Calu3 (cell line): ENCODE measurements at regions of chr2 and their contacts with region 1.

Region 1: GRCh38 chr2:176283251-176283650 is 14.0 kb downstream of the MTX2 start:
- DNase-seq: no peak
- H3K4me3 Mint-ChIP-seq: no peak overlapping the region
- H3K27ac Mint-ChIP-seq: no peak overlapping the region
- H3K4me1 Mint-ChIP-seq: peaks cover 35% of the 10 kb centered on the region
- H3K27me3 Mint-ChIP-seq: no peaks in the 10 kb centered on the region
- CTCF ChIP-seq: no peak

Region 2: DNA sequence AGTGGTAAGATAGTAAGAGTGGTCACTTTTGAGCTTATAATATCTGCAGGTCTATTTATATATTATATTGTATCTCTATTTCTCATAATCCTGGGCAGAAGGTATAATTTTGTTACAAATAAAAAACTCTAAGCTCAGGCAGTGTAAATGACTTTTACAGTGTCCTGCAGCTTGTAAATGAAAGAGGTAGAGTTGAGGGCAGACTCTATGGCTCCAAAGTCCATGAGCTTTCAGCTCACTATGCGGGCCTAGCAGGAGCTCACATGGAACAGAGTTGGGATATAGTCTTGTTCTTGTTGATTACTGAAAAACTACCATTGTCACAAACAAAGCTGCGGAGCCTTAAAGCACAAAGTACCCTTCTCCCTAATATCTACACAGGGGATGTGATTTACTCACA is 642.6 kb before region 1 on chr2:
- CTCF ChIA-PET with region 1: no interaction called
- intact Hi-C with region 1: no loop called
- DNase-seq: no peak
- H3K4me3 Mint-ChIP-seq: no peak overlapping the region
- H3K27ac Mint-ChIP-seq: no peak overlapping the region
- H3K4me1 Mint-ChIP-seq: no peaks in the 10 kb centered on the region
- H3K27me3 Mint-ChIP-seq: no peaks in the 10 kb centered on the region
- CTCF ChIP-seq: no peak

Region 3: DNA sequence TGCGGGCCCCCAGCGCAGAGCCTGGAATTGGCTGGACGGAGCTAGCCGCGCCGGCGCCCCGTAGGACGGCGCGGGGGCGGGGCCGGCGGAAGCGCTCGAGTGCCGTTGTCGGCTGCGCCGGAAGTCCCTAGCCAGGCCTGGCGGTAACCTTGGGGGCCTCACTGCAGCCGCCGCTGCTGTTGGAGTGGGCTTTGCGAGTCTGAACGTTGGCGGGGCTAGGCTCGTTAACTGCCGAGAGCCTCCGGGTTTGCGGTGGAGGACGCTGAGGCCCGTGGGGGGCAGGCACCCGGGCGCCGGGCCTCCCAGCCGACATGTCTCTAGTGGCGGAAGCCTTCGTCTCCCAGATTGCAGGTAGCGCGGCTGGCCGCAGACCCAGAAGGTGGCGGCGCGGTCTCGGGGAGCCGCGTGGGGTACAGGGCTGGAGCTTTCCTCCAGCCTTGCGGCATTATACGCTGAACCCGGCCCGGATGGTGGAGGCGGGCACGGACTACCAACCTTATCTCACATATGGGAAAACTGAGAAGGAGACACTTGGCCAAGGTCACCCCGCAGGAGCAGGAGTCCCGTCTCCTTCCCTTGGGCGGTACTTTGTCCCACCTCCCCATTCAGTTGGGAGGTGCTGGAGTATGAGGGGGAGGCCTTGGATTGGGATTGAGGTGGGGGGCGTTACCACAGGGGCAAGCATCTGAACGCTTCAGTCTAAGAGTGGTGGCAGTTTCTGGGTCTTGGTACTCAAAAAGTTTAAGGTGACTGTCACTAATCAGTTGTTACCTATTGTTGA is 13.7 kb before region 1 on chr2 and contains the start of gene MTX2:
- CTCF ChIA-PET with region 1: no interaction called
- intact Hi-C with region 1: loop called (anchors 1 kb)
- DNase-seq: peak; percentile 86
- H3K4me3 Mint-ChIP-seq: peak within 1 kb of the TSS; percentile 97
- H3K27ac Mint-ChIP-seq: peak within 1 kb of the TSS; percentile 81
- H3K4me1 Mint-ChIP-seq: peaks cover 13% of the 10 kb centered on the region
- H3K27me3 Mint-ChIP-seq: no peaks in the 10 kb centered on the region
- CTCF ChIP-seq: peak; percentile 26
- total RNA-seq, gene MTX2: 36.0 and 44.7 TPM in 2 replicates